Endothelial cell of umbilical vein (primary cell): ENCODE measurements at regions of chr17 and their contacts with region 1.

Region 1: DNA sequence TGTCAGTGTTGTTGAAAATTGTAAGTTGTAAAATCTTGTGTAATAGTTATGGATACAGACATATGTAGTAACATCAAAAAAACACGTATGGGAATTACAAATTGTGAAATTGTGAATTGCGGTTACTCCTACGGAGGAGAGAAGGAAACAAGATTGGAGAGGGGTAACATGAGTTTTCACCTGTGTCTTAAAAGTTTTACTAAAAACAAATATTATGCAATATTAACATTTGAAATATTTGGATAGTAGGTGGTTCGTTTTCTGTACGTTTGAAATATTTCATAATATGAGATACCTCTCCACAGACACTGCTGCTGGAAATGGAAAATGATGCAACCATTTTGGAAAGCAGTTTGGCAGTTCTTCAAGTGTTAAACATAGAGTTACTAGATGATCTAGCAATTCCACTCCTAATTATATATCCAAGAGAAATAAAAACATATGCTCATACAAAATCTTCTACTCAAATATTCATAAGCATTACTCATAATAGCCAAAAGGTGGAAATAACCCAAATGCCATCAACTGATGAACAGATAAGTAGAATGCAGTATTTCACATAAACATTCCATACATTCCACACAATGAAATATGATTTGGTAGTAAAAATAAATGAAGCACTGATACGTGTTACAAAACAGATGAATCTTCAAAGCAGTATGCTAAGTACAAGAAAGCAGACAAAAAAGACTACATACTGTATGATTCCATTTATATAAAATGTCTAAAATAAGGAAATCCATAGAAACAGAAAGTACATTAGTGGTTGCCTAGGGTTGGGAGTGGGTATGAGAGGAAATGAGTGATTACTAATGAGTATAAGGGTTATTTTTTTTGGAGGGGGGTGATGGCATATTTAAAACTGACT is 40.7 kb upstream of the ABCA10 start:
- DNase-seq: peak; percentile 85
- H3K4me3 ChIP-seq: peak overlapping the region in 1 of 3 experiments; percentile 50
- H3K27ac ChIP-seq: peak overlapping the region; percentile 86
- H3K4me1 ChIP-seq: peaks cover 29% of the 10 kb centered on the region
- H3K27me3 ChIP-seq: no peaks in the 10 kb centered on the region
- CTCF ChIP-seq: no peak
- POLR2A ChIP-seq: no peak

Region 2: DNA sequence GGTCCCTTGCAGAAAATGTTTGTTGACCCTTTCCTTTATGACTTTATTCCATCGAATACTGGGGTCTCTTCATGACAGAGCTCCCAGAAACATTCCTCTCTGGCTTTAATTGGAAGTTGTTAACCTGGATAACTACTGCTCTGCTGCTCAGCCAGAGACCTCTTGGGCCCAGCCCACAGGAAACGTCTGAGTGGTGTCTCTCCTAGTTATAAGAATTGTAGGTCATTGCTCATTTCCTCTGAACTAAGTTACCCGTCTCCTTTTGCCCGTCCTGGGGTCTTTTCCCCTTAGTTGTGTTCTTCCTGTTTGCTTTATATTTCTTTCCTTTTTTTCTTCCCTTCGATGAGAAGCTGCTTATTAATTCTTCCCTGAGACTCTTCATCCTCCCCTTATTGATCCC is 154.1 kb after region 1 on chr17:
- CTCF ChIA-PET with region 1: no interaction called
- POLR2A ChIA-PET with region 1: no interaction called
- dilution Hi-C with region 1: no loop called
- intact Hi-C with region 1: loop called (anchors 1 kb)
- DNase-seq: peak; percentile 91
- H3K4me3 ChIP-seq: no peak overlapping the region
- H3K27ac ChIP-seq: peak overlapping the region; percentile 95
- H3K4me1 ChIP-seq: peaks cover 41% of the 10 kb centered on the region
- H3K27me3 ChIP-seq: no peaks in the 10 kb centered on the region
- CTCF ChIP-seq: no peak
- POLR2A ChIP-seq: peak; percentile 50

Region 3: DNA sequence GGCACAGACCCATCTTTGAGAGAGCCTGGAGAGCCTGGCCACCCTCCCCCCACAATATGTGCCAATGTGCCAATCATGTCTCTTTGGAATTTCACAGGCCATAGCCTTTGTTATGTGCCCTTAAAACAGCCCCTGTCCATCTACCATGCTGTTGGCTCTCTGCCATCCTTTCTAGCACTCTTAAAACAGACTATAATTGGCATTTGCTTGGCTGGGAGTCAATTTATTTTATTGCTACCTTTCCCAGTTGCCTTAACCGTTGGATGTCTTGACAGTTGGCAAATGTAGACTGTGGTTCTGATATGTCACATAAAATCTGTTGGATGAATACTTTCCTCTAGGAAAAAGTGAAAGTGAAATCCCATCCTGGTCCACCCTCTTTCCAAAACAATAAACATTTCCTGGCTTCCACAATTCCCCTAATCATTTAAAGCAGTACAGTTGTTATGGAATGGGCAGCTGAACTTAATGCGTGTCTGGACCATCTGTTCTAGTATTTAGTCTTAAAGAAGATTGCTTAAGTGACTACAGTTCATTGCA is 1294.0 kb after region 1 on chr17:
- CTCF ChIA-PET with region 1: no interaction called
- POLR2A ChIA-PET with region 1: no interaction called
- dilution Hi-C with region 1: no loop called
- intact Hi-C with region 1: loop called (anchors 5 kb)
- DNase-seq: peak; percentile 92
- H3K4me3 ChIP-seq: peak overlapping the region in 1 of 3 experiments; percentile 30
- H3K27ac ChIP-seq: peak overlapping the region; percentile 25
- H3K4me1 ChIP-seq: peaks cover 31% of the 10 kb centered on the region
- H3K27me3 ChIP-seq: no peaks in the 10 kb centered on the region
- CTCF ChIP-seq: no peak
- POLR2A ChIP-seq: no peak